ENCODE measurements at regions of chr1 and their contacts with region 1.

Region 1: GRCh38 chr1:227999056-227999930 is 7.5 kb upstream of the WNT3A start:
- DNase-seq: peak; percentile 85
- ATAC-seq: peak; percentile 97
- H3K4me3 Mint-ChIP-seq: no peak overlapping the region
- H3K27ac Mint-ChIP-seq: no peak overlapping the region
- H3K4me1 Mint-ChIP-seq: no peaks in the 10 kb centered on the region
- H3K27me3 Mint-ChIP-seq: peaks cover 14% of the 10 kb centered on the region
- CTCF ChIP-seq: peak; percentile 80

Region 2: GRCh38 chr1:227946624-227947385 is 52.5 kb before region 1 on chr1:
- CTCF ChIA-PET with region 1: no interaction called
- POLR2A ChIA-PET with region 1: no interaction called
- intact Hi-C with region 1: no loop called
- DNase-seq: peak; percentile 62
- ATAC-seq: peak; percentile 81
- H3K4me3 Mint-ChIP-seq: peak overlapping the region; percentile 44
- H3K27ac Mint-ChIP-seq: no peak overlapping the region
- H3K4me1 Mint-ChIP-seq: peaks cover 2% of the 10 kb centered on the region
- H3K27me3 Mint-ChIP-seq: peaks cover 18% of the 10 kb centered on the region
- CTCF ChIP-seq: peak; percentile 76

Region 3: DNA sequence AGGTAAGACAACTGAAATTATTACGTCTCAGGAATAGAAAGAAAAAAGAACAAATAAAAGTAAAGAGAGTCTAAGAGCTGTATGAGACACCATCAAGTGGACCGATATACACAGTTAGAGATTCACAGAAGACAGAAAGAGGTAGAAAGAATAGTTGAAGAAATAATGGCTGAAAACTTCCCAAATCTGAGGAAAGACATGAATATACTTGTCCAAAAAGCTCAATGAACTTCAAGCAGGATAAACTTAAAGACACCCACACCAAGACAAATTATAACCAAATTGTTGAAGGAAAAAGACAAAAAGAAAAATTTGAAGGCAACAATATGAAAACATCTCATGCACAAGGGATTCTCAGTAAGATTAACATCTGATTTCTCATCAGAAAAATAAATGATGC is 12.1 kb before region 1 on chr1:
- CTCF ChIA-PET with region 1: interaction called, 16 read pairs
- POLR2A ChIA-PET with region 1: no interaction called
- intact Hi-C with region 1: no loop called
- DNase-seq: no peak
- ATAC-seq: no peak
- H3K4me3 Mint-ChIP-seq: no peak overlapping the region
- H3K27ac Mint-ChIP-seq: no peak overlapping the region
- H3K4me1 Mint-ChIP-seq: no peaks in the 10 kb centered on the region
- H3K27me3 Mint-ChIP-seq: peaks cover 22% of the 10 kb centered on the region
- CTCF ChIP-seq: no peak

Region 4: DNA sequence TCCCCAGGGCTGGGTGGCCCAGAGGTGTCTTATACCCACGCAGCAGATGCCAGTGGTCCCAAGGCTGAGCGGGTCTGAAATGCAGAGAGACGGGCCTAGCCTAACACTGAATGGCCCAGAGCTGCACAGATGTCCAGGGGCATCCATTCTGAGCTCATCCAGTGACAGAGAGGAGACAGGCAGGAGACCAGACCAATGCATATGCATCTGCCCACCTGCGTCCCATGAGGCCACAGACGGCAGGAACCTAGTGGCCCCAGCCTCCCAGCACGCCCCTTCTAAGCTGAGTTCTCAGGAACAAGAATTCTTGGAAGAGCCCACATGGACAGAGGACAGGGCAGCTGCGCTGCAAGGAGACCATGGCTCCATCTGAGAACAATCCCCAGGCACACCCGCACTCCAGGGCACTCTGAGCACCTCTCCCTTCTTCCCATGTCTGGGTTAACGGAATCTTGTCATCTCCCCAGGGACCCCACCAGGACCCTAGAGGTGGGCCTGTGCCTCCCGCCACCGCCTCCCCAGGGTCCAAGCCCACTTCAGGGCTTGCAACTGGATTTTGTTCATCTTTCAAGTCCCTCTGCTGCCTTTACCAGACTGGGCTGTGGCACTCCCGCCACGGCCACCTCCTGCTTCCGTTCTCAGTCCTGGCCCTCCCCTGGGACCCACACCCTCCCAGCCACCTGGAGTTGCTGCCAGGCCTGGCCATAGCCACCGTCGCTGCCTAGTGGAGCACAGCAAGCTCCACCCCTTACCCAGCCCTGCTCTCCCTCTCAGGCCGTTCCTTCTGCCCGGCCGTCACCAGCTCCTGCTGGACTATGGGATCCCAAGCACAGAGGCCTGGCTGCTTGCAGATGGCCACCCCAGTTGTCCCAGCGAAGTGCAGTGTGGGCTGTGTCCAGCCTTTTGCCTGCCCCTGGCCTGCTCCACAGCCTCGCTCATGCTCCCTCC is 10.8 kb after region 1 on chr1:
- CTCF ChIA-PET with region 1: interaction called, 12 read pairs
- POLR2A ChIA-PET with region 1: interaction called, 3 read pairs
- intact Hi-C with region 1: no loop called
- DNase-seq: no peak
- ATAC-seq: no peak
- H3K4me3 Mint-ChIP-seq: no peak overlapping the region
- H3K27ac Mint-ChIP-seq: no peak overlapping the region
- H3K4me1 Mint-ChIP-seq: peaks cover 11% of the 10 kb centered on the region
- H3K27me3 Mint-ChIP-seq: peaks cover 39% of the 10 kb centered on the region
- CTCF ChIP-seq: no peak

Region 5: DNA sequence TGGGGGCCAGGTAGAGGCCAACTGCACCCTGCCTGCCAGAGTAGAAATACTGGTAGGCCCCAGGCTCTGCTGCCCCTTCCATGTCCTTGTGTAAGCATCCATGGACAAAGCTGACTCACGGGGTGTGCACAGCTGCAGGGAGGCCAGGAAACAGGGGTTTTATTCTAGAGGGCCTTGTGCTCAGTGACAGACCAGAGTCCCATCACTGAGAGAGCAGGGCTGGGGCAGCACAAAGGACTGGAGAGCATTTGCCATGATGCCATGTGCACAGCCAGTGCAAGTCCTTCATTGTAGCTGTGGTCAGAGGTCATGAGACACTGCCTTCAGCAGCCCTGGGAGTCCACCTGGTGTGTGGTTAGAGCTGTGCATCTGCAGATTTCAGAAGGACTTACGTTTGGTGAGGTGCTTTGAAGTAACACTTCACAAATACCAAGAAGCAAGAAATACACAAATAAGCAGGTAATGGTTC is 91.4 kb after region 1 on chr1:
- CTCF ChIA-PET with region 1: interaction called, 10 read pairs
- POLR2A ChIA-PET with region 1: no interaction called
- intact Hi-C with region 1: no loop called
- DNase-seq: peak; percentile 1
- ATAC-seq: no peak
- H3K4me3 Mint-ChIP-seq: peak overlapping the region; percentile 27
- H3K27ac Mint-ChIP-seq: peak overlapping the region; percentile 25
- H3K4me1 Mint-ChIP-seq: peaks cover 77% of the 10 kb centered on the region
- H3K27me3 Mint-ChIP-seq: no peaks in the 10 kb centered on the region
- CTCF ChIP-seq: no peak

Region 6: GRCh38 chr1:228120857-228121489 is 121.7 kb after region 1 on chr1:
- CTCF ChIA-PET with region 1: interaction called, 10 read pairs
- POLR2A ChIA-PET with region 1: no interaction called
- intact Hi-C with region 1: no loop called
- DNase-seq: no peak
- ATAC-seq: peak; percentile 82
- H3K4me3 Mint-ChIP-seq: peak overlapping the region; percentile 63
- H3K27ac Mint-ChIP-seq: peak overlapping the region; percentile 32
- H3K4me1 Mint-ChIP-seq: peaks cover 3% of the 10 kb centered on the region
- H3K27me3 Mint-ChIP-seq: no peaks in the 10 kb centered on the region
- CTCF ChIP-seq: no peak

Measured in activated CD8-positive, alpha-beta T cell treated with anti-CD3 and anti-CD28 coated beads for 36 hours (primary cell).